Activated CD4-positive, alpha-beta T cell treated with anti-CD3 and anti-CD28 coated beads, Interleukin-2, amount 10 ng/mL, durations not matched to agents 24 days and 14 days (primary cell): ENCODE measurements at regions of chr3 and their contacts with region 1.

Region 1: DNA sequence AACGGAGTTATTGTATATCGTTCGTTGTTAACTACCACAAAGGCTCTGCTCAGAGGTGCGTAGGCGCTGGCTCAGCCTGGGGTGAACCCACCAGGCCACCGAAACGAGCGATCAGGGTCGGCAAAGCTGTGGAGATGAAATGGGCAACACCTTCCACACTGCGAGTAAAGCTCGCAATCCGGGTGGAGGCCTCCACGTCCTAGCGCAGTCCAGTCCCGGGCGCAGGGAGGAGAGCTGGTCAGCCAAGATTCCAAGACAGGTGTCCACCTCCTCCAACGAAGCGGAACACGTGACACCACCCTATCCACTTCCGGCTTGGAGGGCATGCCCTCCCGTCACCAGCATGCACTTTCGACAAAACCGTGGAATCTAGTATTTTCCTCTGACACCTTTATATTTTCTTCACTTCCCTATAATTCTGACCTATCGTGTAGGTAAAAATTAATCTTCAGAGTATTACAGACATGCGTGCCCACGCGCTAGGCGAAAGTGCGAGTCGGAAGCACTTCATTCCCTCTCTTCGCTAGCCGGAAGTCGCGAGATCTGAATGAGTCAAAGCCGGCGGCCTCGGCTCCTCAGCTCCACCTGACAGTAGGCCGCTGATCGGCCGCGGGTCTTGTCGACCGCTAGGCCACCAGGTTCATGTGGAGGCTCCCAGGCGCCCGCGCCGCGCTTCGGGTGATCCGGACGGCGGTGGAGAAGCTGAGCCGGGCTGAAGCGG is at the start of gene PDE12:
- DNase-seq: peak; percentile 94
- H3K4me3 Mint-ChIP-seq: peak within 1 kb of the TSS; percentile 79
- H3K27ac Mint-ChIP-seq: peak within 1 kb of the TSS; percentile 97
- H3K4me1 Mint-ChIP-seq: peaks cover 32% of the 10 kb centered on the region
- H3K27me3 Mint-ChIP-seq: no peaks in the 10 kb centered on the region
- total RNA-seq, gene PDE12: 34.4 TPM in 2 replicates

Region 2: DNA sequence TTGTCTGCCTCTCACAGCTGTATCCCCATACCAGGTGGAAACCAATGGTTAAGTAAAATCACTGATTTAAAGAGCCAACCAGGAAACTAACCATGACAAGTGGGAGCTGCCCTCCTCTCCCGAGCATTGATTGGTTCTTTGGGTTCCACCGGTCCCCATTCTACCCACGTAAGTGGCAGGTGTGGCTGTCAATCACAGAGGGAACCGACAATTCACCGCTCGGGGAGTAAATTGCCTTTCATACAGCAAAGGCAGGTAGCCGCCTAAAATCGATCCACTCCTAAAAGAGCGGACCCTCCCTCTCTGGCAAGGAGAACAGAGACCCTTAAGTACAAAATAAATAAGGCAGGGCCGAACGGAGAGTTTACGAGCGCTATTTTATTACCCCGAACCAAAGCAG is 1088.8 kb before region 1 on chr3:
- intact Hi-C with region 1: no loop called
- DNase-seq: peak; percentile 69
- H3K4me3 Mint-ChIP-seq: peak overlapping the region; percentile 54
- H3K27ac Mint-ChIP-seq: no peak overlapping the region
- H3K4me1 Mint-ChIP-seq: peaks cover 3% of the 10 kb centered on the region
- H3K27me3 Mint-ChIP-seq: peaks cover 57% of the 10 kb centered on the region

Region 3: GRCh38 chr3:57281715-57282114 is 274.2 kb before region 1 on chr3:
- intact Hi-C with region 1: no loop called
- DNase-seq: no peak
- H3K4me3 Mint-ChIP-seq: no peak overlapping the region
- H3K27ac Mint-ChIP-seq: no peak overlapping the region
- H3K4me1 Mint-ChIP-seq: no peaks in the 10 kb centered on the region
- H3K27me3 Mint-ChIP-seq: peaks cover 2% of the 10 kb centered on the region

Region 4: DNA sequence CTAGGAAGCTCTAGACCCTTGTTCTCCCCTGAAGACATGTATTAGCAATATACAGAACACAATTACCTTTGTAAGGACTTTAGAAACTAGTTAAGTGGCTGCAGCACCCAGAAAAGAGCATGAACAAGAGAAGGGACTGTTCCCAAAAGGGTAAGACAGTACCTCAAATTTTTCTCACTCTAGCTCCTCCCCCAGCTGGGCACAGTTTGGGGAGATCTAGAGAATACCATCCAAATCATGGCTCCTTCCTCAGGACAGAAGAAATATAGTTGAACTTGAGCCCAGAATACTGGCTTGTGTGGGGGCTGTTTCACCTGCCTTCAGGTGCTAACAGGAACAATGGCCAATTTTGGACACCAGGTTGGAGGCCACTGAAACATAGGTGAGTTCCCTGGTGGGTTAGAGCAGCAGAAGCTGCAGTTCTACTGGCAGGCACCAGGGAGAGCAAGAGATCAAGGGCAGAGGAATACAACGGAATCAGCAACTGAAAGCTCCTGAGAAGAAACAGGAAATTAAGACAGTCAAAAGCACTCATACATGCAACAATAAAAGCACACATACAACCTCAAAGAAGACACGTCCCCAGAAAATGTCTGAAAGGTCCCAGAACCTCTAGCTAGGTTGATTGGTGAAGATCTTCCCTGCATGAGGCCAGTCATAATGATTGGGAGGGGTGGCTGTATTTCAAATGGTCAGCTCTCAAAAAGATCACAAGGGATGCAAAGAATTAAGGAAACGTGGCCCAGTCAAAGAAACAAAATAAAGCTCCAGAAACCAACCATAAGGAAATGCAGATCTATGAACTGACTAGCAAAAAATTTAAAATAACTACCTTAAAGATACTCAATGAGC is 158.5 kb before region 1 on chr3:
- intact Hi-C with region 1: loop called (anchors 2 kb)
- DNase-seq: peak; percentile 90
- H3K4me3 Mint-ChIP-seq: no peak overlapping the region
- H3K27ac Mint-ChIP-seq: peak overlapping the region; percentile 14
- H3K4me1 Mint-ChIP-seq: peaks cover 11% of the 10 kb centered on the region
- H3K27me3 Mint-ChIP-seq: peaks cover 18% of the 10 kb centered on the region

Region 5: GRCh38 chr3:57582474-57583168 is 26.7 kb after region 1 on chr3:
- intact Hi-C with region 1: loop called (anchors 2 kb)
- DNase-seq: no peak
- H3K4me3 Mint-ChIP-seq: no peak overlapping the region
- H3K27ac Mint-ChIP-seq: no peak overlapping the region
- H3K4me1 Mint-ChIP-seq: peaks cover 16% of the 10 kb centered on the region
- H3K27me3 Mint-ChIP-seq: no peaks in the 10 kb centered on the region

Region 6: GRCh38 chr3:57597122-57597923 is 41.4 kb after region 1 on chr3 and contains the start of gene ARF4:
- intact Hi-C with region 1: loop called (anchors 1 kb)
- DNase-seq: peak; percentile 100
- H3K4me3 Mint-ChIP-seq: peak within 1 kb of the TSS; percentile 87
- H3K27ac Mint-ChIP-seq: peak within 1 kb of the TSS; percentile 99
- H3K4me1 Mint-ChIP-seq: peaks cover 32% of the 10 kb centered on the region
- H3K27me3 Mint-ChIP-seq: no peaks in the 10 kb centered on the region
- total RNA-seq, gene ARF4: 84.4 and 91.4 TPM in 2 replicates

Region 7: GRCh38 chr3:58722561-58722960 is 1166.7 kb after region 1 on chr3:
- intact Hi-C with region 1: no loop called
- DNase-seq: no peak
- H3K4me3 Mint-ChIP-seq: no peak overlapping the region
- H3K27ac Mint-ChIP-seq: no peak overlapping the region
- H3K4me1 Mint-ChIP-seq: no peaks in the 10 kb centered on the region
- H3K27me3 Mint-ChIP-seq: peaks cover 3% of the 10 kb centered on the region